PC-9 (cell line): ENCODE measurements at regions of chr15 and their contacts with region 1.

Region 1: GRCh38 chr15:80173022-80173759 is 20.4 kb downstream of the FAH start:
- DNase-seq: peak; percentile 58 to 78
- H3K4me3 ChIP-seq: no peak overlapping the region
- H3K27ac ChIP-seq: no peak overlapping the region
- H3K4me1 ChIP-seq: peaks cover 8% of the 10 kb centered on the region; the same call in 1 of the 2 replicates
- H3K27me3 ChIP-seq: no peaks in the 10 kb centered on the region
- CTCF ChIP-seq: peak; percentile 82

Region 2: DNA sequence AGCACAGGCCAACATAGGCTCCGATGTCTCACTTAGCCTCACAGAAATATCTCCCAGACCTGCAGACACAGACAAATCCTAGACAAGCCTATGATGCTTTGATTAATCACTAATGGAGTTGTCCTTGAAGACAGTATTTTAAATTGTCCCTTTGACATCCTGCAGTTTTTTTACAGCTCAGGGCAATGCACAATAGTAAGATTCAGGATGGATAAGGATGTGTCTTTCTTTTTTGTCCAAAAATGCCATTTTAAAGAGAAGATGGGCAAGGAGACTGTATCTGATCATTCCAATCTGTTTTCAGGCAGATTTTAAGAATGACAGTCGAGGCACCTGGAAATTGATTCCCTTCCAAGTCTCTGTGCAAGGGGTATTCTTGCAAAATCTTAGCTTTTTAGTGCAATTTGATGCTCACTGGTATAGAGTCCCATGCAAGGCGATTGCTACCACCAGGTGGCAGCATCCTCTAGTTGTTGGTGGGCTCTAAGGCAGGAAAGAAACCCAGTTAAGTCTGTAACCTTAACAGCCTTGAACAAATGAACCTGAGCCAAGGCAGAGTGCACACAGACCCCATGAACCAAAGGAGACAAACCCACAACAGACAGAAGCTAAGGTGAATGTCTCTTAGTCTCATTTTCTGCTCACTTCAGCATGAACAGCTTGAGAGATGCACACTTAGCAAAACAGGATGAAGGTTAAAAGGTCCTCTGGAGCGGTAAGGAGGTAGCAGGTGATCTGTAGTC is 792.3 kb before region 1 on chr15:
- CTCF ChIA-PET with region 1: no interaction called
- POLR2A ChIA-PET with region 1: no interaction called
- intact Hi-C with region 1: loop called (anchors 1 kb)
- DNase-seq: peak; percentile 42 to 61
- H3K4me3 ChIP-seq: no peak overlapping the region
- H3K27ac ChIP-seq: no peak overlapping the region
- H3K4me1 ChIP-seq: no peaks in the 10 kb centered on the region
- H3K27me3 ChIP-seq: no peaks in the 10 kb centered on the region
- CTCF ChIP-seq: peak; percentile 91

Region 3: GRCh38 chr15:79596051-79596507 is 577.1 kb before region 1 on chr15:
- CTCF ChIA-PET with region 1: no interaction called
- POLR2A ChIA-PET with region 1: no interaction called
- intact Hi-C with region 1: loop called (anchors 10 kb)
- DNase-seq: peak; percentile 55 to 78
- H3K4me3 ChIP-seq: no peak overlapping the region
- H3K27ac ChIP-seq: no peak overlapping the region
- H3K4me1 ChIP-seq: no peaks in the 10 kb centered on the region
- H3K27me3 ChIP-seq: peaks cover 62% of the 10 kb centered on the region
- CTCF ChIP-seq: peak; percentile 91

Region 4: GRCh38 chr15:79853458-79854328 is 319.5 kb before region 1 on chr15:
- CTCF ChIA-PET with region 1: no interaction called
- POLR2A ChIA-PET with region 1: no interaction called
- intact Hi-C with region 1: loop called (anchors 1 kb)
- DNase-seq: peak; percentile 45 to 53
- H3K4me3 ChIP-seq: no peak overlapping the region
- H3K27ac ChIP-seq: no peak overlapping the region
- H3K4me1 ChIP-seq: no peaks in the 10 kb centered on the region
- H3K27me3 ChIP-seq: no peaks in the 10 kb centered on the region
- CTCF ChIP-seq: peak; percentile 83

Region 5: DNA sequence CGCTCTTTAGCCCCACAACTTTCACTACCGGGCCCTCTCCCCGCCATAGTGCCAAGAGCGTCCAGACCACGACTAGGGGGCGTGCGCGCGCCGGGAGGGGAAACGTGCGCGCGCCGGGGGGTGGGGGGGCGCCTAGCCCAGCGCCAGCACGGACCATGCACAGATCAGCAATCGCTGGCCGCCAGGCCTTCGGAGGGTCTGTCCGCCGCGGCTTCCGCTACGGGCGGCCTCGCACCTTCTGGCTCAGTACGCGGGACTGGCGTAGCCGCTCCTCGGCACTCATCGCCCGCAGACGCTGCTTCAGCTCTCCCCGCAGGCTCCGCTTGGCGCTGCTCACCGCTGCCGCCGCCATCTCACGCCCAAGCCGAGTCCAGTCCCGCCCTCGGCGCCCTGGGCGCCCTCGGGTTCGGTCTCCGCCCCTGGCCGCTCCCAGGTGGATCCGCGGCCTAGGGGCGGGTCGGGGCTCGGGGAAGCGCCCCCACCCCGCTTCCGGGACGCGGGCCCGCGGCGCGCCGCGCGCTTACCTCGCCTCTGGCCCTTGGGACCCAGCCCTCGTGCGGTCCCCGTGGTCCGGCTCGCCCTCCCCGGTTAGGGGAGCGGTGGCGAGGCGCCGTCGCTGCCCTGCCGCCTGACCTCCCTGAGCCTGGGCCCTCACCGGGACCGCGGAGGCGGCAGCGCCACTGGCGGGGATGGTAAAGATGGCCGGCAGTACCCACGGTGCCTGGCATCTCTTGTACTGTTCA is 276.4 kb before region 1 on chr15 and contains the start of gene MTHFS:
- CTCF ChIA-PET with region 1: no interaction called
- POLR2A ChIA-PET with region 1: no interaction called
- intact Hi-C with region 1: loop called (anchors 1 kb)
- DNase-seq: peak; percentile 66 to 84
- H3K4me3 ChIP-seq: peak within 1 kb of the TSS; percentile 70
- H3K27ac ChIP-seq: peak within 1 kb of the TSS; percentile 79
- H3K4me1 ChIP-seq: peaks cover 39% of the 10 kb centered on the region
- H3K27me3 ChIP-seq: no peaks in the 10 kb centered on the region
- CTCF ChIP-seq: peak; percentile 64
- total RNA-seq, gene MTHFS: 27.1 and 33.6 TPM in 2 replicates

Region 6: GRCh38 chr15:79989682-79990081 is 183.5 kb before region 1 on chr15:
- CTCF ChIA-PET with region 1: no interaction called
- POLR2A ChIA-PET with region 1: no interaction called
- intact Hi-C with region 1: loop called (anchors 5 kb)
- DNase-seq: peak in 1 of 2 experiments; percentile 48
- H3K4me3 ChIP-seq: no peak overlapping the region
- H3K27ac ChIP-seq: no peak overlapping the region
- H3K4me1 ChIP-seq: peaks cover 20% of the 10 kb centered on the region
- H3K27me3 ChIP-seq: no peaks in the 10 kb centered on the region
- CTCF ChIP-seq: no peak

Region 7: DNA sequence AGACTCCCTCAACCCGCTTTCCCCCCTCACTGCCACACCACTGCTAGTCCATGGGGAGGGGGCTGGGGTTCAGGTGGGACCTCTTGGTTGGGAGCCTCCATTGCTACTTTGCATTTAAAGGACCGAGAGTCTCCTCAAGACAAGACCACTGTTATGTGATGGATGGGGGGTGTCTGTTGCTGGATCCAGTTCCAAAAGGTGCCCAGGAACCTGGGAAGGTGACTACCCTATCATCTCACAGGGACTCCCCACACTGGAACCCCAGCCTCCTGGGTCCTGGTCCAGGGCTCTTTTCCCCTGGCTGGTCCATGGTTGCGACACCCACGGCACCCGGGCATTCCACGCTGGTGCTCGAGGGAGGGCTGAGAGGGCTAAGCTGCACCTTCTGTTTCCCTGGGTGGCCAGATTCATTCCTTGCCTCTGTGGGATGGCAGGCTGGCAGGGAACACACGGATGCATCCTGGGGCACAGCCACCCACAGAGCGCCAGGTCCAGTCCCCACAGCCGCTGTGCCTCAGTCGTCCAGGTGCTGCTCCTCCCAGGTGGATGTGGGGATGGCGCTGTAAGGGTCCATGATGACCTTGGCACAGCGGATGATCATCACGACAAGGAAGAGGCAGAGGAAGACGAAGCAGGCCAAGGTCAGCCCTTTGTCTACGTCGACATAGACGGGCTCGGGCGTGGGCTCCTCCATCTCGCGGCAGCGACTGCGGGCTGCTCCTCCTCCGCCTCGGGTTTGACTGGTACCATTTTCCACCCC is 28.2 kb after region 1 on chr15:
- CTCF ChIA-PET with region 1: no interaction called
- POLR2A ChIA-PET with region 1: no interaction called
- intact Hi-C with region 1: no loop called
- DNase-seq: no peak
- H3K4me3 ChIP-seq: no peak overlapping the region
- H3K27ac ChIP-seq: no peak overlapping the region
- H3K4me1 ChIP-seq: 0 out of 2 replicates have a peak, but pooled peaks cover 3% of the 10 kb centered on the region
- H3K27me3 ChIP-seq: no peaks in the 10 kb centered on the region
- CTCF ChIP-seq: no peak

Region 8: DNA sequence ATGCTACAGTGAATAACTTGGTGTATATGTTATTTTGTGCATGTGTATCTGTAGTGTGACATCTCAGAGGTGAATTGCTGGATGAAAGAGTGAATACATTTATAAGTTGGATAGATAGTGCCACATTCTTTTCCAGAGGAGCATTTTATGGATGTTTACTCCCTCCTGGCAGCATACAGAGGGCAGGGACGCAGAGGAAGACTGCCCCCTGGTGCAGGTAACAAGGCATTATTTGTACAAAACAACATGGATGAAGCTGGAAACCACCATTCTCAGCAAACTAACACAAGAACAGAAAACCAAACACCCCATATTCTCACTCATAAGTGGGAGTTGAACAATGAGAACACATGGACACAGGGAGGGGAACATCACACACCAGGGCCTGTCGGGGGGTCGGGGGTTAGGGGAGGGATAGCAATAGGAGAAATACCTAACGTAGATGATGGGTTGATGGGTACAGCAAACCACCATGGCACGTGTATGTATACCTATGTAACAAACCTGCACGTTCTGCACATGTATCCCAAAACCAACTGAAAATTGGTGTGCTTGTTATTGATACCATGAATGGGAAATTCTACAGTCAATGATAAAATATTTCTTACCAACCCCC is 136.7 kb after region 1 on chr15:
- CTCF ChIA-PET with region 1: no interaction called
- POLR2A ChIA-PET with region 1: no interaction called
- intact Hi-C with region 1: no loop called
- DNase-seq: no peak
- H3K4me3 ChIP-seq: no peak overlapping the region
- H3K27ac ChIP-seq: no peak overlapping the region
- H3K4me1 ChIP-seq: no peaks in the 10 kb centered on the region
- H3K27me3 ChIP-seq: peaks cover 29% of the 10 kb centered on the region
- CTCF ChIP-seq: peak; percentile 58

Region 9: GRCh38 chr15:80401456-80401855 is 228.3 kb after region 1 on chr15:
- CTCF ChIA-PET with region 1: no interaction called
- POLR2A ChIA-PET with region 1: no interaction called
- intact Hi-C with region 1: no loop called
- DNase-seq: no peak
- H3K4me3 ChIP-seq: no peak overlapping the region
- H3K27ac ChIP-seq: no peak overlapping the region
- H3K4me1 ChIP-seq: no peaks in the 10 kb centered on the region
- H3K27me3 ChIP-seq: peaks cover 44% of the 10 kb centered on the region
- CTCF ChIP-seq: no peak